Caco-2 (cell line): ENCODE measurements at regions of chr22 and their contacts with region 1.

Region 1: GRCh38 chr22:41403532-41404318 is 22.0 kb downstream of the TEF start:
- DNase-seq: peak; percentile 82 to 86
- H3K4me3 ChIP-seq: no peak overlapping the region
- H3K4me3 Mint-ChIP-seq: no peak overlapping the region
- H3K27ac Mint-ChIP-seq: no peak overlapping the region
- H3K4me1 ChIP-seq: no peaks in the 10 kb centered on the region
- H3K4me1 Mint-ChIP-seq: peaks cover 16% of the 10 kb centered on the region
- H3K27me3 ChIP-seq: no peaks in the 10 kb centered on the region
- H3K27me3 Mint-ChIP-seq: no peaks in the 10 kb centered on the region
- CTCF ChIP-seq: peak; percentile 90 to 94

Region 2: GRCh38 chr22:41285820-41286638 is 117.7 kb before region 1 on chr22 and contains the start of gene RANGAP1:
- CTCF ChIA-PET with region 1: no interaction called
- POLR2A ChIA-PET with region 1: no interaction called
- intact Hi-C with region 1: no loop called
- DNase-seq: peak; percentile 98 to 99
- H3K4me3 ChIP-seq: peak within 1 kb of the TSS; percentile 78
- H3K4me3 Mint-ChIP-seq: peak within 1 kb of the TSS; percentile 88
- H3K27ac Mint-ChIP-seq: peak within 1 kb of the TSS; percentile 92
- H3K4me1 ChIP-seq: peaks cover 39% of the 10 kb centered on the region
- H3K4me1 Mint-ChIP-seq: peaks cover 32% of the 10 kb centered on the region
- H3K27me3 ChIP-seq: no peaks in the 10 kb centered on the region
- H3K27me3 Mint-ChIP-seq: no peaks in the 10 kb centered on the region
- CTCF ChIP-seq: peak in 1 of 2 experiments; percentile 23
- total RNA-seq, gene RANGAP1: 106 and 112 TPM in 2 replicates

Region 3: GRCh38 chr22:41367039-41367679 is 36.6 kb before region 1 on chr22:
- CTCF ChIA-PET with region 1: no interaction called
- POLR2A ChIA-PET with region 1: no interaction called
- intact Hi-C with region 1: no loop called
- DNase-seq: no peak
- H3K4me3 ChIP-seq: no peak overlapping the region
- H3K4me3 Mint-ChIP-seq: no peak overlapping the region
- H3K27ac Mint-ChIP-seq: no peak overlapping the region
- H3K4me1 ChIP-seq: peaks cover 26% of the 10 kb centered on the region
- H3K4me1 Mint-ChIP-seq: peaks cover 8% of the 10 kb centered on the region
- H3K27me3 ChIP-seq: no peaks in the 10 kb centered on the region
- H3K27me3 Mint-ChIP-seq: no peaks in the 10 kb centered on the region
- CTCF ChIP-seq: no peak

Region 4: DNA sequence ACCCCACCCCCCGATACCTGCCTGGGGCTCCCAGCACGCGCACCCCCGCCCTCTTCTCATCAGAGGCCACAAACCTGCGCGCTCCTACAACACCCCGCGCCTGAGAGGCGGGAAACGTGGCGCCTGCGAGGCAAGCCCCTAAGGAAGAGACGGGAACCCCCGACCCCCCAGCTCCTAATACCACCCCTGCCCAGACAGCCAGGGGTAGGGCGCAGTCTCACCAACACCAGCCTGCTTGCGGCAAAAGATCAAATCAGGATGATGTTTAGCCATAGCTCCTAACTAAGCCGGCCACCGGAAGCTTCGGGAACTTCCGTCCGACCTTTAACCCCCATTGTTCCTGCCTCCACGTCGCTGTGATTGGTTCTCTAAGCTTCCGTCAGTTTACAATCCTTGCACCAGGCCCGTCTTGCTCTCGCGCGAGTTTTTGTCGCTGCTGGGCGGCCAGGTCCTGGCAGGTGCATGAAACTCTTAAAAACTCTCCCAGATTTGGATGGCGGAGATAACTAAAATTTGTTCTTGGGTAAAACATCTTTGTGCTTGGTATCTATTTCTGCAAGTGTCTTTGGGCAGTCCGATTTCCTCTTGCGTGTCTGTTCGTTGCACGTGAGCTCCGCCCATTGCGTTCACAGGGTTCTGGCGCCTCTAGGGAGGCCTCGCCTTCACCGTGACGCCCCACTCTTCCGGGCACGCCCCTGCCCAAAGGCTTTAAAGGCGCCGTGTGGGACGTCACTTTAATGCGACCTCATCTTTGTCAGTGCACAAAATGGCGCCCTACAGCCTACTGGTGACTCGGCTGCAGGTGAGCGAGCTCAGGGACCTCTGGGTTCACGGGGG is 64.9 kb after region 1 on chr22 and contains the starts of genes ACO2 and PHF5A:
- CTCF ChIA-PET with region 1: interaction called, 13 read pairs
- POLR2A ChIA-PET with region 1: no interaction called
- intact Hi-C with region 1: no loop called
- DNase-seq: peak; percentile 97
- H3K4me3 ChIP-seq: peak within 1 kb of the TSS; percentile 96
- H3K4me3 Mint-ChIP-seq: peak within 1 kb of the TSS; percentile 92
- H3K27ac Mint-ChIP-seq: peak within 1 kb of the TSS; percentile 100
- H3K4me1 ChIP-seq: peaks cover 18% of the 10 kb centered on the region
- H3K4me1 Mint-ChIP-seq: peaks cover under 1% of the 10 kb centered on the region
- H3K27me3 ChIP-seq: no peaks in the 10 kb centered on the region
- H3K27me3 Mint-ChIP-seq: no peaks in the 10 kb centered on the region
- CTCF ChIP-seq: no peak
- total RNA-seq, gene ACO2: 90.5 and 95.5 TPM in 2 replicates
- total RNA-seq, gene PHF5A: 75.4 and 78.6 TPM in 2 replicates

Region 5: DNA sequence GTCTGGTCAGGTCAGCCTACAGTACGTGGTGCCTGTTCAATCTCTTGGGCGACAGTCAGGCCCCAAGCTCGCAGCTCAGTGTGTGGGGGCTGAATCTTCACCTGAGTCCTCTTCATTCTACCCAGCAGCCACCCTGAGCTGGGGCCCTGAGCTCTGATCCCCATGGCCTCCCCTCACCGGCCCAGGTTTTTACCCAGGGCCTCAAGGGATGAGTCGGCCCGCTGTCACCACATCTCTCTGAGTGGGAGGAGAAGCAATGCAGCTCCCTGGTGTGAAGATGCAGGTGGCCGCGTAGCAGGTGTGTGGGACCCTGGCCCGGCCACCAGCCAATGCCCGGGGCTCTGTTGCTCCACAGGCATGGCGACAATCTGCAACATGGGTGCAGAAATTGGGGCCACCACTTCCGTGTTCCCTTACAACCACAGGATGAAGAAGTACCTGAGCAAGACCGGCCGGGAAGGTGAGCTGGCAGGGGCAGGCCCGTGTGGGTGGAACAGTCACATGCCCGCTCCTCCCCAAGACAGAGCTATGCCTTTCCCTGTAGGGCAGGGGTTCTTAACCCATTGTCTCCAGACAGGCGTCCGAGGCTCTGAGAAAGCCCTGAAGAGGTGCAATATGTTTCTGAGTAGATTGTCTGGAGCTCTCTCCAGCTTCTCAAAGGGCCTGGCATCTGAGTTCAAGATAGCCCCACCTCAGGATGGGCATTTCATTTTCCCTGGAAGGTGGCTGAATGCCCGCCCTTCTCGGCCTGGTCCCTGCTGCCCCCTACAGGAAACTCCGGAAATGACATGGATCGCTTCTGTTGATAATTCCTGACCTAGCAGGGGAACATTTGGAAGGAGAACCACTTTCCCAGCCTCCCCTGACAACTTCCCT is 113.7 kb after region 1 on chr22:
- CTCF ChIA-PET with region 1: interaction called, 45 read pairs
- POLR2A ChIA-PET with region 1: no interaction called
- intact Hi-C with region 1: loop called (anchors 1 kb)
- DNase-seq: peak; percentile 57 to 79
- H3K4me3 ChIP-seq: no peak overlapping the region
- H3K4me3 Mint-ChIP-seq: no peak overlapping the region
- H3K27ac Mint-ChIP-seq: no peak overlapping the region
- H3K4me1 ChIP-seq: no peaks in the 10 kb centered on the region
- H3K4me1 Mint-ChIP-seq: peaks cover 7% of the 10 kb centered on the region
- H3K27me3 ChIP-seq: no peaks in the 10 kb centered on the region
- H3K27me3 Mint-ChIP-seq: no peaks in the 10 kb centered on the region
- CTCF ChIP-seq: peak; percentile 76 to 78

Region 6: GRCh38 chr22:41526837-41527799 is 123.4 kb after region 1 on chr22:
- CTCF ChIA-PET with region 1: interaction called, 14 read pairs
- POLR2A ChIA-PET with region 1: no interaction called
- intact Hi-C with region 1: no loop called
- DNase-seq: peak in 1 of 2 experiments; percentile 74
- H3K4me3 ChIP-seq: no peak overlapping the region
- H3K4me3 Mint-ChIP-seq: no peak overlapping the region
- H3K27ac Mint-ChIP-seq: peak overlapping the region; percentile 10
- H3K4me1 ChIP-seq: no peaks in the 10 kb centered on the region
- H3K4me1 Mint-ChIP-seq: peaks cover 7% of the 10 kb centered on the region
- H3K27me3 ChIP-seq: no peaks in the 10 kb centered on the region
- H3K27me3 Mint-ChIP-seq: no peaks in the 10 kb centered on the region
- CTCF ChIP-seq: peak; percentile 83 to 84